T-cell (primary cell): ENCODE measurements at regions of chr11 and their contacts with region 1.

Region 1: DNA sequence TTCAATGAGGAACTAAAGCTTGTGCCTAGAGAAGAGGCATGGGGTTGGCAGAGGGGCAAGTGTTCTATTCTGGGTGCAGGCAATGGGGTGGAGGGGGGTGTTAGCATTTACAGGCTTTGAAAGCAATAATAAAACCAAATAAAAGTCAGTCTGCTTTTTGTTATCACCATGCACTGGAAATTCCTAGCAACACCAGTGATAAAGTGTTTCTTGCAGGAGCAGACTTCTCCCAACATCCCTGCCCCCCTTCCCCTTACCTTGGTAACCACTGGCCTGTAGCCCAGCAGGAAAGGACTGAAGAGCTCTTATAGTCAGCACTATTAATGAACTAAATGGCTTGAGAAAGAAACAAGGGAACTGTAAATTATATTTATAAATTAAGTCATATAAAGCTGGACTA is 65.2 kb upstream of the SESN3 start:
- DNase-seq: no peak
- ATAC-seq: no peak
- H3K4me3 ChIP-seq: no peak overlapping the region
- H3K4me3 Mint-ChIP-seq: no peak overlapping the region
- H3K27ac ChIP-seq: no peak overlapping the region
- H3K27ac Mint-ChIP-seq: no peak overlapping the region
- H3K4me1 ChIP-seq: peaks cover 17 to 19% of the 10 kb centered on the region in 2 experiments
- H3K4me1 Mint-ChIP-seq: peaks cover 25 to 36% (median 27%) of the 10 kb centered on the region in 3 donors
- H3K27me3 ChIP-seq: peaks cover 0 to 3% of the 10 kb centered on the region in 2 experiments
- H3K27me3 Mint-ChIP-seq: no peaks in the 10 kb centered on the region

Region 2: DNA sequence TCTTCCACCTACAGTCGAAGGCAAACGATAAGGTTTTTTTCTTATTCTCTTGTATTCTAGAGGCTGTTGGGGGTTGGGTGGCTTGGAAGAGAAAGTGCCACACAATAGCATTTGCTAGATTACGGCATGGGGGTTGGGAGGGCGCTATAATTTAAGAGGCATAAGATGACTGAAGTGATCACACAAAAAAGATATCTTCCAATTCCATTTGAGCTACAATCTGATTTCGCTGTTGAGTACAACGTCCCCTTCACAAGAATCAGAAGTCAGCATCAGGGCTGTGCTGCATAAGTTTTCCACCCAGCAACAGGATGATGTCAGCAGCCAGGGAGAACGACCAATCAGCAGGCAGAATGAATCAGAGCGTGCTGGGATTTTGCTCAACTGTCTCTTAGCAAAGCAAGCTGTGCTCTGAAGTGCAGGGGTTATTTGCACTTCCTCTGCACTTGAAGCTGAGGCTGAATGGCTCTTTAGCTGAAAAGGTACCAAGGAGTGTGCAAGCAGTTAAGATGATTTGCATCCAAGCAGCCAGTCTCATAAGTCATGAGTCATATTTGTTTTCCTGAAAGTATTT is 41.9 kb before region 1 on chr11:
- CTCF ChIA-PET with region 1: no interaction called
- POLR2A ChIA-PET with region 1: interaction called in 1 of 2 experiments, 17 read pairs
- DNase-seq: peak; percentile 57 to 91 (median 80)
- ATAC-seq: peak; percentile 99
- H3K4me3 ChIP-seq: peak overlapping the region; percentile 45 to 64
- H3K4me3 Mint-ChIP-seq: peak overlapping the region; percentile 76 to 80 (median 78)
- H3K27ac ChIP-seq: peak overlapping the region; percentile 73
- H3K27ac Mint-ChIP-seq: peak overlapping the region; percentile 84 to 93
- H3K4me1 ChIP-seq: peaks cover 31 to 38% of the 10 kb centered on the region in 2 experiments
- H3K4me1 Mint-ChIP-seq: peaks cover 40 to 51% (median 43%) of the 10 kb centered on the region in 3 donors
- H3K27me3 ChIP-seq: no peaks in the 10 kb centered on the region
- H3K27me3 Mint-ChIP-seq: no peaks in the 10 kb centered on the region